PC-3 (cell line): ENCODE measurements at regions of chr6 and their contacts with region 1.

Region 1: DNA sequence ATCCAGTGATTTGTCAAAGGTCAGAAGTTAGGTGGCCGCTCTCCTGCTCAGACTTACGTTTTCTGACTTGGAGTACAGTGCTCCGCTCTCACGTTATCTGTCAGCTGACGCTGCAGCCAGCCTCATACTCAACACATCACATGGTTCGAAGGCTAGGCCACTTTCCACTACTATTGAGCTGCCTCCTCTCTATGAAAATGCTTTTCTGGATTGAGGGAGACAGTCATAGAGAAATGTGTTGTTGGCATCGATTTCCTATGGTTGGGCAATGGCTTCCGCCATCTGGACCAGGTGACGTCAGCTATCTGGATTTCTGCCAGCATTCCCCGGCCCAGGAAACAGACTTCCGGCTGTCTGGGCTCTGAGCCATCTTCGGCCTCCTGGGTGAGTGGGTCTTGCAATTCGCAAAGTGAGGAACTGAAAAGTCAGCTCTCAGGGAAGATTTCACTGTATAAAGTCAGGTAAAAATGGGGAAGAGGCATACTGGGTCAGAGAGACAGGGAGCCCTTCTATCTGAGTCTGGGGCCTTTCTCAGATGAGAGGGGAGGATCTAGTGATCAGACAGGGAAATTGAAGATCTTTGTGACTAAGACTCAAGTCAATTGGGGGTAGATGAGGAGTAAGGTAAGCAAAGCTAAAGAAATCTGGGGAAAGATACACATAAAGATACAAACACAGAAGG is 37.5 kb upstream of the IER3 start:
- DNase-seq: peak; percentile 99
- ATAC-seq: peak; percentile 64
- H3K4me3 ChIP-seq: peak overlapping the region; percentile 43
- H3K27ac ChIP-seq: peak overlapping the region; percentile 96
- H3K4me1 ChIP-seq: peaks cover 52% of the 10 kb centered on the region
- H3K27me3 ChIP-seq: no peaks in the 10 kb centered on the region
- CTCF ChIP-seq: no peak

Region 2: GRCh38 chr6:30600451-30600961 is 181.4 kb before region 1 on chr6:
- CTCF ChIA-PET with region 1: no interaction called
- POLR2A ChIA-PET with region 1: no interaction called
- intact Hi-C with region 1: no loop called
- DNase-seq: no peak
- ATAC-seq: no peak
- H3K4me3 ChIP-seq: no peak overlapping the region
- H3K27ac ChIP-seq: no peak overlapping the region
- H3K4me1 ChIP-seq: no peaks in the 10 kb centered on the region
- H3K27me3 ChIP-seq: no peaks in the 10 kb centered on the region
- CTCF ChIP-seq: no peak

Region 3: DNA sequence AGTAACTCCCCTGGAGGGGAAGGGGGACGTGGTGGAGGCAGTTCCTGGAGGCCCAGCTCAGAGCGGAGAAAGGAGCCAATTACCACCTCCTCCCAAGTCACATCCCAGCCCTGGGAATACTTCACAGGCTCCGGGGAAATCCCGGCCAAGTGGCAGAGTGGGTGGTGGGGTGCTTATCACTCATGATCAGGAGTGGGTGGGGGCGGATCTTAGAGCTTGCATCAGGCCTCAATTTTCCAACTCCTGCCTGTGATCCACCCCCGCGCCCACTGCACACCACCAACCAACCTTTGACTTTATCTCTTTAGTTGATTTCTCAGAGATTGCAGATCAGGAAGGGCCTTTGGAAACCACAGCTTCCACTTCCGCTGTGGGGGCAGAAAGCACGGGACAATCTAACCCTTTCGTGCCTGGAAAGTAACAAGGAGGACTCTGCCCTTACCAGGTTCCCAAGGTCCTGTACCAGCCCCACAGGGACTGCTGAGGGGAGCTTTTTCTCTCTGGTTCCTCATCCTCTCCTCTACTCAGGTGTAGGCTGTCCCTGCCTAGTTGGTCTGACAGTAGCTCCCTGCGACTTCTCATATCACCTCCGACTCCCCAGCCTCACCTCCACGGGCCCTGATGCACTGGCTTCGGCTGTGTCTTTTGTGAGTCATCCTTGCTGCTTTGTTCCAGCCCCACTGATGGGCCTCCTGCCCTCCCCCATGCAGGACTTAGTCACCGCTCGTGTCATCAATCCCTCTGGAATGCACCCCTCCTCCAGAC is 12.6 kb before region 1 on chr6:
- CTCF ChIA-PET with region 1: interaction called, 3 read pairs
- POLR2A ChIA-PET with region 1: interaction called, 12 read pairs
- intact Hi-C with region 1: loop called (anchors 1 kb)
- DNase-seq: peak; percentile 96
- ATAC-seq: peak; percentile 90
- H3K4me3 ChIP-seq: peak overlapping the region; percentile 39
- H3K27ac ChIP-seq: peak overlapping the region; percentile 98
- H3K4me1 ChIP-seq: peaks cover 36% of the 10 kb centered on the region
- H3K27me3 ChIP-seq: no peaks in the 10 kb centered on the region
- CTCF ChIP-seq: no peak

Region 4: GRCh38 chr6:30836431-30836866 is 54.6 kb after region 1 on chr6:
- CTCF ChIA-PET with region 1: no interaction called
- POLR2A ChIA-PET with region 1: no interaction called
- intact Hi-C with region 1: no loop called
- DNase-seq: no peak
- ATAC-seq: no peak
- H3K4me3 ChIP-seq: no peak overlapping the region
- H3K27ac ChIP-seq: no peak overlapping the region
- H3K4me1 ChIP-seq: no peaks in the 10 kb centered on the region
- H3K27me3 ChIP-seq: no peaks in the 10 kb centered on the region
- CTCF ChIP-seq: no peak

Region 5: DNA sequence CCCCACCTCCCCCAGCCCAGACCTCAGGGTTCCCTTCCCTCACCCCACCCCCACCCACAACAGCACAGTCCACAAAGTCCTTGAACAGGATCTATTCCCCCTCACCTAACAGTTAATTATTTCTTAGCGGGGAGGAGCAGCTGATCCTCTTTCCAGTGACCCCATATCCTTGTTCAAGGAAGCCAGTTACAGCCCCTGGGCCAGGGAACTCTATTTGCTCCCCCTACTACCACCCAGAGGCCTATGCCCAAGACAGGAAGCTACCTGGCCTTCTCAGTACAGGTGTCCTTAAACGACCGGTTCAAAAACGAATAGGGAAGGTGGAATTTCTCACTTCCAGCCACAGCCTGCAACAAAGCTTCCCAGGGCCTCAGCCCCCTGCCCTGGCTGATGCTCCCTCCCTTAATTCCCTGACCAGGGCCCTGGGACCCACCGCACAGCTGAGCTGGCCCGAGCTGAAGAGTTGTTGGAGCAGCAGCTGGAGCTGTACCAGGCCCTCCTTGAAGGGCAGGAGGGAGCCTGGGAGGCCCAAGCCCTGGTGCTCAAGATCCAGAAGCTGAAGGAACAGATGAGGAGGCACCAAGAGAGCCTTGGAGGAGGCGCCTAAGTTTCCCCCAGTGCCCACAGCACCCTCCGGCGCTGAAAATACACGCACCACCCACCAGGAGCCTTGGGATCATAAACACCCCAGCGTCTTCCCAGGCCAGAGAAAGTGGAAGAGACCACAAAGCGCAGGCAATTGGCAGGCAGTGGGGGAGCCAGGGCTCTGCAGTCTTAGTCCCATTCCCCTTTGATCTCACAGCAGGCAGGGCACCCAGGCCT is 747.7 kb after region 1 on chr6:
- CTCF ChIA-PET with region 1: no interaction called
- POLR2A ChIA-PET with region 1: no interaction called
- intact Hi-C with region 1: no loop called
- DNase-seq: no peak
- ATAC-seq: peak; percentile 3; the same call in 1 of the 2 replicates
- H3K4me3 ChIP-seq: no peak overlapping the region
- H3K27ac ChIP-seq: no peak overlapping the region
- H3K4me1 ChIP-seq: peaks cover 8% of the 10 kb centered on the region
- H3K27me3 ChIP-seq: no peaks in the 10 kb centered on the region
- CTCF ChIP-seq: no peak